ENCODE measurements at regions of chr5 and their contacts with region 1.

Region 1: GRCh38 chr5:103562453-103563157 is at the start of gene NUDT12:
- DNase-seq: peak; percentile 88
- total RNA-seq, gene NUDT12: 11.4 TPM

Region 2: GRCh38 chr5:103258368-103258956 is 304.1 kb before region 1 on chr5 and contains the start of gene MACIR:
- intact Hi-C with region 1: loop called (anchors 10 kb)
- DNase-seq: peak; percentile 99
- total RNA-seq, gene MACIR: 3.4 TPM